Activated CD4-positive, alpha-beta T cell treated with anti-CD3 and anti-CD28 coated beads for 36 hours (primary cell): ENCODE measurements at regions of chr3 and their contacts with region 1.

Region 1: GRCh38 chr3:44529927-44530326 is 25.1 kb upstream of the ZKSCAN7 start:
- DNase-seq: peak; percentile 53
- ATAC-seq: no peak
- H3K4me3 Mint-ChIP-seq: no peak overlapping the region
- H3K27ac Mint-ChIP-seq: no peak overlapping the region
- H3K4me1 Mint-ChIP-seq: no peaks in the 10 kb centered on the region
- H3K27me3 Mint-ChIP-seq: peaks cover 7% of the 10 kb centered on the region

Region 2: GRCh38 chr3:44323341-44323955 is 206.5 kb before region 1 on chr3:
- CTCF ChIA-PET with region 1: interaction called, 4 read pairs
- POLR2A ChIA-PET with region 1: no interaction called
- intact Hi-C with region 1: loop called (anchors 5 kb)
- DNase-seq: peak; percentile 75
- ATAC-seq: no peak
- H3K4me3 Mint-ChIP-seq: no peak overlapping the region
- H3K27ac Mint-ChIP-seq: no peak overlapping the region
- H3K4me1 Mint-ChIP-seq: no peaks in the 10 kb centered on the region
- H3K27me3 Mint-ChIP-seq: peaks cover 2% of the 10 kb centered on the region

Region 3: GRCh38 chr3:44913868-44914468 is 384.0 kb after region 1 on chr3:
- CTCF ChIA-PET with region 1: interaction called, 14 read pairs
- POLR2A ChIA-PET with region 1: no interaction called
- intact Hi-C with region 1: loop called (anchors 1 kb)
- DNase-seq: peak; percentile 80
- ATAC-seq: peak; percentile 73
- H3K4me3 Mint-ChIP-seq: no peak overlapping the region
- H3K27ac Mint-ChIP-seq: no peak overlapping the region
- H3K4me1 Mint-ChIP-seq: no peaks in the 10 kb centered on the region
- H3K27me3 Mint-ChIP-seq: peaks cover 7% of the 10 kb centered on the region

Region 4: DNA sequence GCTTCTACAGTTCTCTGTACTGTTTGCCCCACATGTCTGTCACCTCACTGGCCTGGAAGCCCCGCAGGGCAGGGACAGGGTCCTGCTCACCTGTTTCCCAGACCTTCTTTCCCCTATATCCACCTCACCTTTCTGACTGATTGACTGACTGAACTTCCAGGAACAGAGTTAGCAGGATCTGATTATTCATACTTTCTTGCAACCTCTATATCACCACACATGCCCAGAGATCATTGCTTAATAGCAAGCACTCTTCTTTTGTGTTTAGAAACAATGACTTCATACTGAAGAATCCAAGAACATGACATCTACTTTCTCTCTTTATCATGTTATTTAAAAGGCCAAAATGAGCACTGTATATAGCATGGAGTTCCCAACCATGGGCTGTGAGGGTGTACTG is 478.2 kb after region 1 on chr3:
- CTCF ChIA-PET with region 1: no interaction called
- POLR2A ChIA-PET with region 1: no interaction called
- intact Hi-C with region 1: loop called in 1 of 2 experiments (anchors 10 kb)
- DNase-seq: no peak
- ATAC-seq: no peak
- H3K4me3 Mint-ChIP-seq: no peak overlapping the region
- H3K27ac Mint-ChIP-seq: no peak overlapping the region
- H3K4me1 Mint-ChIP-seq: peaks cover 20% of the 10 kb centered on the region
- H3K27me3 Mint-ChIP-seq: no peaks in the 10 kb centered on the region